ENCODE measurements at regions of chr7 and their contacts with region 1.

Region 1: DNA sequence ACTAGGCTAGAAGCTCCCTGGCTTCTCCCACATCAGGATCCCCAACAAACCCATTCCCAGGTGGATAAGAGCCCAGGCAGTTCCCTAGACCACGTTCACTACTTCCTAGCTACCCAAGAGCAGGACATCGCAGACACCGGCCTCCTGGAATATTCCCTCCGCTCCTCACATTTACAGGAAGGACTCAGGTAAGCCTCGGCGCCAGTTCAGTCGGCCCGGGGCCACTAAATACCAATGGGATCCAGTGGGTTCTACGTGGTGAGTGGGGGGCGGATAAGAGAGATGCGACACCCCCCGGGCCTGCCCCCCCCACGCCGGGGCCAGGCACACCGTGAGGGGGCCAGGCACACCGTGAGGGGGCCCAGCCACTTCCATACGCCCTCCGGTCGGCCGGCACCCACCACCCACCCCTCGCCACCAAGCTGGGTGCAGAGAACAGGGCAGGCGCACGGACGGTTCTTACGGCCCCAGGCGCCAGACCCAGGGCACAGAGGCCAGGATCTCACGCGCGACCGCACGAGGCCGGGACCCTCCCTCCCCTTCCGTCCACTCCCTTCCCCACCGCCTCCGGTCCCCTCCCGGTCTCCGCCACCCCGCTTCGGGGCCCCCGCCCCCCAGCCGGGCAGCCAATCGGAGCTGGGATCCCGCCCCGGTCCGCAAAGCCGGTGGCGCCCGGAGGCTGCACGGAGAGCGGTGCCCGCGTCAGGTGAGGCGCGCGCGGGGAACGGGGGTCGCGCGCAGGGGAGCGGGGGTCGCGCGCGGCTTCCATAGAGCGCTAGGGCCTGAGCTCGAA is at the start of gene BLVRA:
- DNase-seq: peak; percentile 60
- H3K4me3 Mint-ChIP-seq: peak within 1 kb of the TSS; percentile 73
- H3K27ac Mint-ChIP-seq: no peak within 1 kb of the TSS
- H3K4me1 Mint-ChIP-seq: peaks cover 39% of the 10 kb centered on the region
- H3K27me3 Mint-ChIP-seq: peaks cover 25% of the 10 kb centered on the region
- total RNA-seq, gene BLVRA: 30.9 and 32.2 TPM in 2 replicates

Region 2: GRCh38 chr7:43674584-43675436 is 83.4 kb before region 1 on chr7:
- intact Hi-C with region 1: no loop called
- DNase-seq: no peak
- H3K4me3 Mint-ChIP-seq: no peak overlapping the region
- H3K27ac Mint-ChIP-seq: no peak overlapping the region
- H3K4me1 Mint-ChIP-seq: peaks cover 49% of the 10 kb centered on the region
- H3K27me3 Mint-ChIP-seq: no peaks in the 10 kb centered on the region

Region 3: GRCh38 chr7:43735802-43736541 is 22.3 kb before region 1 on chr7:
- intact Hi-C with region 1: loop called (anchors 1 kb)
- DNase-seq: no peak
- H3K4me3 Mint-ChIP-seq: no peak overlapping the region
- H3K27ac Mint-ChIP-seq: peak overlapping the region; percentile 23
- H3K4me1 Mint-ChIP-seq: peaks cover 15% of the 10 kb centered on the region
- H3K27me3 Mint-ChIP-seq: peaks cover 1% of the 10 kb centered on the region

Region 4: GRCh38 chr7:44163591-44163990 is 405.4 kb after region 1 on chr7:
- intact Hi-C with region 1: no loop called
- DNase-seq: no peak
- H3K4me3 Mint-ChIP-seq: no peak overlapping the region
- H3K27ac Mint-ChIP-seq: no peak overlapping the region
- H3K4me1 Mint-ChIP-seq: peaks cover 6% of the 10 kb centered on the region
- H3K27me3 Mint-ChIP-seq: peaks cover 14% of the 10 kb centered on the region

Region 5: DNA sequence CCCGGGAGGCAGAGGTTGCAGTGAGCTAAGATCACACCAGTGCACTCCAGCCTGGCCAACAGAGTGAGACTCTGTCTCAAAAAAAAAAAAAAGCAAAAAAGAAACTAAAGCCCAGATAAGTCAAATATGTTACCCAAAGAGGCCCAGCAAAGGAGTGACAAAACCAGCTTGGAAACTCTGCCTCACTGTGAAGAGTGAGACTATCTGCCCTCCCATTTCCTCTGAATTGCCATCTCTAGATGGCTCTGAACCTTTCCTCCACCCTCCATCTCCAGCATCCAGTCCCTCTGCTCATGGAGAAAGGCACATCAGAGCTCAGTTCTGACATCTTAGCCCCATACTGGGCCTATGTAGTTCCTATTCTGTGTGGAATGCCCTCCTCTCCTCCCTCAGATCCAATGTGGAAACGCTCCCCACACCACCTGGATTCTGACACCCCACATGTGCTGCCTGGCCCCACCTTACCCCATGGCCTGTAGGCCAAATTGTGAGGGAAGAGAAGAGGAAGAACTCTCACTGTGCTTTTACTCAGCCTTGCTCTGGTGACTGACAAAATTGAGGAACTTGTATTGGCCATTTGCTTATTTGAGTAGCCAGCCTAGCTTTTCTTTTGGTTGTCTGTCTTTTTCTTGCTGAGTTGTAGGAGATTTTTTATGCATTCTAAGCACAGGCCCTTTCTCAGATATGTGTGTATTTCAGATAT is 750.3 kb after region 1 on chr7:
- intact Hi-C with region 1: no loop called
- DNase-seq: no peak
- H3K4me3 Mint-ChIP-seq: no peak overlapping the region
- H3K27ac Mint-ChIP-seq: no peak overlapping the region
- H3K4me1 Mint-ChIP-seq: peaks cover 5% of the 10 kb centered on the region
- H3K27me3 Mint-ChIP-seq: peaks cover 3% of the 10 kb centered on the region